Pancreas (tissue), 10 donors: ENCODE measurements at regions of chr7 and their contacts with region 1.

Region 1: DNA sequence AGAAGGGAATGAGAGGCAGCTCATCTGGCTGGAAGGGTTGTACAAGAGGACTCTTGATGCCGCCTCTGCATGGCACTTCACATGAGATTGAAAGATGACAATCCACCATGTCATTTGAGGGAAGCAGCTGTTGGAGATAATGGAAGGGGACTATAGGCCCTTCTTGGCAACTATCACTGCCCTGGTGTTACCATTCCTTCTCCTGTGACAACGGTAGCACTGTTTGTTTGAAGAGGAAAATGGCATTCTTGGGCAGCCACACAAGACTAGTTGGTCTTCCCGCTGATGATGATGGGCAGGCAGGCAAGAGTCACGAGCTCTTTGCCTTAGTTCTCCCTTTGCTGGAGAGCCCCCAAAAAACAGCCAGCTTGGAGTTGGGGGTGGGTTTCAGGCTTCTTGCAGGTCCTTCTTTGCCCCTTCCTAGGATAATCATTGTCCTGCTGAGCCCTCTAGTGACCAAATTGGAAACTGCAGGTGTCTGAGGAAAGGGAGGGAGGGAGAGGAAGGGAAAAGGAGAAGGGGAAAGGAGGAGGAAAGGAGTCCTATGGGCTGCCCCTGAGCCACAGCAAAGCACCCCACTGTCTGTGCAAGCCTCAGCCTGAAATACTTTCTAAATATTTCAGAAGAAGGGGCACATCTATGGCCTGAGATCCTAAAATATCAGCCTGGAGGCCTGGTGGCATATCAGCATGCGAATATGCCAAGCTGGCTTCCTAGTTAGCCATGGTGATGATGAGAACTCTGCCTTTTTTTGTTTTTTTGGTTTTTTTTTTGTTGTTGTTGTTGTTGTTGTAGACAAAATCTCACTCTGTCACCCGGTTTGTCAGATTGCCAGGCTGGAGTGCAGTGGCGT is 165.6 kb upstream of the KMT2E start:
- DNase-seq: peak in 4 of 6 donors; percentile 7 to 57 (median 22)
- ATAC-seq: peak; percentile 43 to 78 (median 75)
- H3K4me3 ChIP-seq: no peak overlapping the region
- H3K27ac ChIP-seq: no peak overlapping the region
- H3K4me1 ChIP-seq: no peaks in the 10 kb centered on the region
- H3K27me3 ChIP-seq: no peaks in the 10 kb centered on the region
- CTCF ChIP-seq: peak; percentile 51 to 84 (median 71)

Region 2: DNA sequence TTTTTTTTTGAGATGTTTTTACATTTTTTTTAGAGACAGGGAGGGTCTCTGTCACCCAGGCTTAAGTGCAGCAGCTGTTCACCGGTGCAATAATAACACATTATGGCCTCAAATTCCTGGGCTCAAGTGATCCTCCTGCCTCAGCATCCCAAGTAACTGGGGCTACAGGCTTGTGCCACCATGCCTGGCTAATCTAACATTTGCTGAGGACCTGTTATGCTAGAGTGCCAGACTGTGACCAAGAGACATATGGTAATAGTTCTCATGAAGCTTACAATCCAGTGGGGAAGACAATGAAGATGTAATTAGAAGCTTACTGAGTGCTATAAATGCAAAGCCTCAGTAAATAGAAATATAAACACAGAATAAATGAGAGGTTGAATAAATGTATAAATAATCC is 622.9 kb before region 1 on chr7:
- intact Hi-C with region 1: loop called in 2 of 3 experiments (anchors 10 kb)
- DNase-seq: no peak
- ATAC-seq: no peak
- H3K4me3 ChIP-seq: no peak overlapping the region
- H3K27ac ChIP-seq: no peak overlapping the region
- H3K4me1 ChIP-seq: no peaks in the 10 kb centered on the region
- H3K27me3 ChIP-seq: no peaks in the 10 kb centered on the region
- CTCF ChIP-seq: no peak

Region 3: DNA sequence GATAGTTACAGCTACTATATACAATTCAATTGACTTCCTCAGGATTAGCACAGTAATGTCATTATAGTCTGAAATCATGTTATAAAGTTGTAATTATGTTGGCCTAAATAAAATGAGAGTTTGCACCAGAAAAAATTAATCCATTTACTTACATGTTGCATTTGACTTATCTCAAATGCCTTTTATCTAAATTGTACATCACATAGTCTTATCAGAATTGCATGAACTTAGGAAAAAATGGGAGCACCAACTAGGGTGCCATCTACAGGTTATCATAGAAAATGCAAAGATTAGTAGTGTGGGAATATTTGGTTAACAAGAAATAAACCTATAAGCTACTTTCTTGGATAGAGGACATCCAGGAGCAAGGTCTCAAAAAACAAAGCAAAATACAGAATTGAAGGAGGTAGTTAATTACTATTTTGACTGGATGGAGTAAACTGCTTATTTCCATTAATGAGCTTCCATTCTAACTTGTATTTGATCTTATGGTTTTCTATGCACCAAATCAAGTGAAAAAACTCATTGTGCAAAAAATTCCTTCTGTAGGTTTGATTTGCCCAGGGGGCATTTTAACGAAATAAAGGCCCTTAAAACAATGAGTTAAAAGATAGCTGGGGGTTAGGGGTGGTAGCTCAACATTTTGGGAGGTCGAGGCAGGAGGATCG is 580.5 kb before region 1 on chr7:
- intact Hi-C with region 1: loop called in 1 of 3 experiments (anchors 10 kb)
- DNase-seq: no peak
- ATAC-seq: peak in 1 of 4 donors; percentile 33
- H3K4me3 ChIP-seq: no peak overlapping the region
- H3K27ac ChIP-seq: no peak overlapping the region
- H3K4me1 ChIP-seq: no peaks in the 10 kb centered on the region
- H3K27me3 ChIP-seq: no peaks in the 10 kb centered on the region
- CTCF ChIP-seq: peak in 1 of 4 donors; percentile 28

Region 4: GRCh38 chr7:104643587-104644217 is 204.7 kb before region 1 on chr7:
- intact Hi-C with region 1: no loop called
- DNase-seq: no peak
- ATAC-seq: no peak
- H3K4me3 ChIP-seq: no peak overlapping the region
- H3K27ac ChIP-seq: no peak overlapping the region
- H3K4me1 ChIP-seq: no peaks in the 10 kb centered on the region
- H3K27me3 ChIP-seq: no peaks in the 10 kb centered on the region
- CTCF ChIP-seq: no peak

Region 5: DNA sequence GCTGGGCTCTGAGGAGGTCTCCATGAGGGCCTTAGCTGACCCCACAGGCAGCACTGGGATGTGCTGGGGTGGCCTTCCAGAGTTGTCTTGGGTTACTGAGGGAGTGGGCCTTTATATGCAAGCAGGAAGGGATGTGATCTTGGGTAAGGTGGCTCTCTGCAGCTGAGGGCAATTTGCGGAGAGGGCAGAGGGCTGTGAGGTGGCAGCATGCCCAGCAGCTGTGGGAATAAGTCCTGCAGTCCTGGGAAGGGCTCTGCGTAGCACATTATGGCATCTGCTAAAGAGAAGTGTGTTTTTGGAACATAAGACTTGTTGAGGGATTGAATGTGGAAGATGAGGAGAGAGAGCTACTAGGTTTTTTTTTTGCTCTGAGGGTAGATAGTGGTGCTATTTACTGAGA is 66.1 kb after region 1 on chr7:
- intact Hi-C with region 1: no loop called
- DNase-seq: no peak
- ATAC-seq: no peak
- H3K4me3 ChIP-seq: no peak overlapping the region
- H3K27ac ChIP-seq: no peak overlapping the region
- H3K4me1 ChIP-seq: no peaks in the 10 kb centered on the region
- H3K27me3 ChIP-seq: no peaks in the 10 kb centered on the region
- CTCF ChIP-seq: no peak